Pancreas (tissue), 10 donors: ENCODE measurements at regions of chr18 and their contacts with region 1.

Region 1: DNA sequence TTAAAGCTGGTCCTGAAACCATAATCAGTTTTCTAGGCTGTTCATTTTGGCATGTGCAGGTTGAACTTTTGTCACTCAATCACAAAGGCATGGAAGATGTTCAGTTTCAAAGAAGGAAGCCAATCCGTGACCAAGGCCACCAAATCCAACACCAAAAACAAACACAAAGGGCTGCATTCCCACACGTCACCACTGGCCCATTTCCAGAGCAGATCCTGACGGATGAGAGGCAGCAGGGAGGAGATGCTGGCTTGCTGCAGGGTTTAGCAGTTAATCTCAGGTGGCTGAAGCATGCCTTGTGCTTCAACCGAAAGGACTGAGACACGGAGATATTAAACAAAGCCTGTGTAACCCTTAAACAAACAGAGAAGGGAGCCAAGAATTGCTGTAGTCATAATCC is 191.9 kb upstream of the CTAGE1 start:
- DNase-seq: peak in 5 of 6 donors; percentile 40 to 68 (median 62)
- ATAC-seq: peak; percentile 20 to 58 (median 34)
- H3K4me3 ChIP-seq: no peak overlapping the region
- H3K27ac ChIP-seq: peak overlapping the region in 2 of 4 donors; percentile 36 to 42
- H3K4me1 ChIP-seq: peaks cover 0 to 5% (median 0%) of the 10 kb centered on the region in 3 donors
- H3K27me3 ChIP-seq: peaks cover 0 to 3% (median 0%) of the 10 kb centered on the region in 4 donors
- CTCF ChIP-seq: no peak

Region 2: DNA sequence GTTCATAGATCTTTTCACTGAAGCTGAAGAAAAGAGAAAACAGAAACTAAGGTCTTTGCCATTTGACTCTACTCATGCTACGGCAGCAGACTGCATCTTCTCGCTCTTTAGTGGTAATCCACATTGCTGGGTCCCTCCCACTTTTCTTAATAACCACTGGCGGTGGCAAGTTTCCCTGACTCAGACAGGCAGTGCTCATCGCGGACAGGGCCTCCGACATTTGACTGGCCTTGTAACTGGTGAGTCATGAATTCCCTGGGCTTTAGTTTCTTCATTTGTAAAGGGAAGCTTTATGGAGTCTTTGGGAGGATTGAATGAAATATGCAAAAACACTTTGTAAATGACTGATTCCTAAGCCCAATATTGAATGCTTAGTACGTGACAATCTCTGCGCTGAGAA is 85.3 kb after region 1 on chr18:
- intact Hi-C with region 1: loop called in 1 of 3 experiments (anchors 10 kb)
- DNase-seq: peak in 1 of 6 donors; percentile 32
- ATAC-seq: peak in 3 of 4 donors; percentile 37 to 68 (median 65)
- H3K4me3 ChIP-seq: no peak overlapping the region
- H3K27ac ChIP-seq: no peak overlapping the region
- H3K4me1 ChIP-seq: no peaks in the 10 kb centered on the region
- H3K27me3 ChIP-seq: no peaks in the 10 kb centered on the region
- CTCF ChIP-seq: no peak

Region 3: GRCh38 chr18:22913857-22914256 is 304.2 kb after region 1 on chr18:
- intact Hi-C with region 1: no loop called
- DNase-seq: peak in 5 of 6 donors; percentile 74 to 93 (median 88)
- ATAC-seq: peak; percentile 93 to 99 (median 98)
- H3K4me3 ChIP-seq: peak overlapping the region; percentile 1 to 50 (median 4)
- H3K27ac ChIP-seq: peak overlapping the region in 3 of 4 donors; percentile 69 to 84 (median 79)
- H3K4me1 ChIP-seq: peaks cover 14 to 33% (median 28%) of the 10 kb centered on the region in 3 donors
- H3K27me3 ChIP-seq: no peaks in the 10 kb centered on the region
- CTCF ChIP-seq: no peak